Gastrocnemius medialis (tissue), 4 donors: ENCODE measurements at regions of chr16 and their contacts with region 1.

Region 1: DNA sequence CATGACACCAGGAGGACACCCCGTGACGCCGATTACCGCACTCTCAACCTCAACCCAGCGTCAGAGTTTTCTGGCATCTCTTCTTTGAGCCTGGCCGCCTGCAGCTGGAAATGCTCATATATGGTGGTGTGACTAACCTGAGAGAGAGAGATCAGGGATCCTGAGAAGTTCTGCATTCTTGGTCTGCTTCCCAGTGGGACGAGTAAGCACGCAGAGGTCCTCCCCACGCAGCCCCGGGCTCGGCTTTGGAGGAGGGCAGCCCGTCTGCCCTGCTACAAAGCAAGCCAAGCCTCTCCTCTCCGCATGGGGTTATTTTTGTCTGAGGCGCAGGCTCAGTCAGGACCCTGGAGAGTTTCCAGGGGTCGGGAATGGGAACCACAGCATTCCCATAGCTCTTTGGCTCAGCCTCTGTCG is 16.5 kb downstream of the CRISPLD2 start:
- DNase-seq: peak; percentile 53 to 84
- ATAC-seq: peak; percentile 43 to 52
- H3K4me3 ChIP-seq: peak overlapping the region in 1 of 4 donors; percentile 11
- H3K27ac ChIP-seq: peak overlapping the region; percentile 65 to 85 (median 79)
- H3K4me1 ChIP-seq: peaks cover 31 to 43% of the 10 kb centered on the region in 2 donors
- H3K27me3 ChIP-seq: no peaks in the 10 kb centered on the region
- CTCF ChIP-seq: no peak
- POLR2A ChIP-seq: peak; percentile 9 to 46

Region 2: GRCh38 chr16:83826146-83826913 is 1009.9 kb before region 1 on chr16:
- in situ Hi-C with region 1: no loop called
- intact Hi-C with region 1: no loop called
- DNase-seq: peak; percentile 82 to 86
- ATAC-seq: peak; percentile 100
- H3K4me3 ChIP-seq: peak overlapping the region in 1 of 4 donors; percentile 35
- H3K27ac ChIP-seq: peak overlapping the region; percentile 6 to 54 (median 44)
- H3K4me1 ChIP-seq: peaks cover 0 to 5% of the 10 kb centered on the region in 2 donors
- H3K27me3 ChIP-seq: no peaks in the 10 kb centered on the region
- CTCF ChIP-seq: peak; percentile 89 to 94 (median 93)
- POLR2A ChIP-seq: no peak

Region 3: GRCh38 chr16:84774810-84775209 is 61.4 kb before region 1 on chr16:
- in situ Hi-C with region 1: no loop called
- intact Hi-C with region 1: loop called (anchors 2 kb)
- DNase-seq: peak; percentile 76 to 83
- ATAC-seq: peak; percentile 98
- H3K4me3 ChIP-seq: peak overlapping the region; percentile 23 to 50 (median 44)
- H3K27ac ChIP-seq: peak overlapping the region; percentile 73 to 87 (median 82)
- H3K4me1 ChIP-seq: peaks cover 0 to 7% of the 10 kb centered on the region in 2 donors
- H3K27me3 ChIP-seq: no peaks in the 10 kb centered on the region
- CTCF ChIP-seq: no peak
- POLR2A ChIP-seq: peak; percentile 68 to 90

Region 4: GRCh38 chr16:84925092-84925772 is 89.0 kb after region 1 on chr16:
- in situ Hi-C with region 1: no loop called
- intact Hi-C with region 1: loop called (anchors 10 kb)
- DNase-seq: peak; percentile 33 to 55
- ATAC-seq: peak in 1 of 2 donors; percentile 36
- H3K4me3 ChIP-seq: no peak overlapping the region
- H3K27ac ChIP-seq: peak overlapping the region in 3 of 4 donors; percentile 8 to 71 (median 52)
- H3K4me1 ChIP-seq: peaks cover 33 to 42% of the 10 kb centered on the region in 2 donors
- H3K27me3 ChIP-seq: no peaks in the 10 kb centered on the region
- CTCF ChIP-seq: peak; percentile 81 to 95 (median 94)
- POLR2A ChIP-seq: no peak

Region 5: DNA sequence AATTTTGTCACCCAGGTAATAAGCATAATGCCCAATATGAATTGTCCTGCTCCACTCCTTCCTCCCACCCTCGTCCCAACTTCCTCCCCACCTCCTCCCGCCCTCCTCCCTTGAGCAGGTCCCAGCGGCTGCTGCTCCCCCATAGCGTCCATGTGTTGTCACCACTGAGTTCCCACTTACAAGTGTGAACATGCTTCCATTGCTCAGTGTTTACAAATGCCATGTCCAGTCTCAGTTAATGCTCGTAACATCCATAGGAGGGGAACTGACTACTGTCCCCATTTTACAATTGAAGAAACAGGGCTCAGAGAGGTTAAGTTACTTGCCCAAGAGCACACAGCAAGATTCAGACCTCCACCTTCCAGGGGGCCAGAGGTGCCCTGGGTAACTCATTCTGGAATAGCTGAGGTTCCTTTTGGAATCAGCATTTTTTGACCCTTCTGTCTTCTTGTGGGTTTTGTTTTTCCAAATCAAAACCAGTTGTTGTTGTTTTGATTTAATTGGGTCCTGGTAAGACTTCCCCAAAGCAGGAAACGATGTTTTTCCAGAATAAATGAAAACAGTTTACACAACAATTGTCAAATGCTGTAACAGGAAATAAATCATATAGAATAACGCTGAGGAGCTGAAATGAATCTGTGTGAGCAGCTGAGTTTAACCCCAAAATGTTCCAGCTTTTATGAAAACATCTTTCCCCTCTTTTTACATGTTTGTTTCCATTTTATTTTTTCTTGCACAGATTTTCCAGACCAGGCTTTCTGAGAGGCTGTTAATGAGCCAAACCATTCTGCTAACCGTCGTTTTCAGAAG is 101.2 kb after region 1 on chr16:
- in situ Hi-C with region 1: no loop called
- intact Hi-C with region 1: no loop called
- DNase-seq: no peak
- ATAC-seq: no peak
- H3K4me3 ChIP-seq: no peak overlapping the region
- H3K27ac ChIP-seq: no peak overlapping the region
- H3K4me1 ChIP-seq: peaks cover 13 to 17% of the 10 kb centered on the region in 2 donors
- H3K27me3 ChIP-seq: no peaks in the 10 kb centered on the region
- CTCF ChIP-seq: no peak
- POLR2A ChIP-seq: no peak